AG04449 (cell line): ENCODE measurements at regions of chr4 and their contacts with region 1.

Region 1: GRCh38 chr4:81040012-81040659 is 9.6 kb downstream of the BMP3 start:
- DNase-seq: peak; percentile 4
- H3K4me3 ChIP-seq: no peak overlapping the region
- CTCF ChIP-seq: peak; percentile 62

Region 2: DNA sequence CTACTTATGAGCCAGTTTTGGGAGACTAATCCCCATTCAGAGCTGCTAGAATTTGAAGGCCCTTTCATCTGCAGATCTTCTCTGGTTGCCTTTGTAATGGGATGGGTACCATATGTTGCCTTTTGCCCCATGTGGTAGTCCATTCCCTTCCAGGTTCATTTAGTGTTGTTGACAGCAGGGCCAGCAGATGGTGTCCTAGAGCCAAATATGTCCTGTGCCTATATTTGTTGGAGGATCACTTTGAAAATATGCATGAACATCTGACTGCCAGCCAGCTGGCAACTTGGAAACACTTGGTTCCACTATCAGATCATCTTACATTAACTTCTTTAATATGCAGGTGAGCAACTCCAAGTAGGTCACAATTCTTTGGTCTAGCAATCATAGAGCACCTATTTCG is 674.2 kb before region 1 on chr4:
- CTCF ChIA-PET with region 1: interaction called, 40 read pairs
- POLR2A ChIA-PET with region 1: no interaction called
- DNase-seq: peak; percentile 33
- H3K4me3 ChIP-seq: no peak overlapping the region
- CTCF ChIP-seq: peak; percentile 72

Region 3: DNA sequence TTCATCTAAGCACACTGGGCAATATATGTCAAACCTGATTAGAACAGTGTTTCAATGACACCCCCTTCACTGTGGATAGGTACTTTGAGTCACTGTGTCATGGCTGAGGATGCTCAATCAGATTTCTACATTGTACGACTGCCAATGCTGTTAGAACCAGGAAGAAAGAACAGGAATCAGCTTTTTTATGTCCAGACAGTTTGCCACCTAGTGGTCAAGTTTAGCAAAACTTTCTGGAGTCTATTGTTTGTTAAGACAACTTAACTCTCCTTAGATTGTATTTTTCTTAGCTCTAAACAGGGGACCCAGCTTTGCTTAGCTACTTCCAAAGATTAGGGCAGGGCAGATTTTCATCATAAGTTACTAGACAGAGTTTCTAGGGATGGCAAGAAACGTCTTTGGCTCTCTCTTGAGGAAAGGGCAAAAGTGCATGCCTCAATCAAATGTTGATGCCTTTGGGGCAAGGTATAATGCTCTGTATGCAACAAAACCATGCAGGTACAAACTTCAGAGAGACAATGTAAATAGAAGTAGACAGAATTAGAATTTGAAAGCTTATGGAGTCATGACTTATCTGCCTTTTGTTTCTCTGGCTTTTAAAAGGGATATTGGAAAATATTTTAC is 50.1 kb before region 1 on chr4:
- CTCF ChIA-PET with region 1: interaction called, 12 read pairs
- POLR2A ChIA-PET with region 1: no interaction called
- DNase-seq: peak; percentile 19
- H3K4me3 ChIP-seq: no peak overlapping the region
- CTCF ChIP-seq: peak; percentile 37

Region 4: GRCh38 chr4:81052119-81053068 is 12.3 kb after region 1 on chr4:
- CTCF ChIA-PET with region 1: interaction called, 36 read pairs
- POLR2A ChIA-PET with region 1: no interaction called
- DNase-seq: peak; percentile 9
- H3K4me3 ChIP-seq: no peak overlapping the region
- CTCF ChIP-seq: peak; percentile 70

Region 5: GRCh38 chr4:81538716-81539427 is 498.7 kb after region 1 on chr4:
- CTCF ChIA-PET with region 1: no interaction called
- POLR2A ChIA-PET with region 1: no interaction called
- DNase-seq: no peak
- H3K4me3 ChIP-seq: no peak overlapping the region
- CTCF ChIP-seq: no peak